ENCODE measurements at regions of chr1 and their contacts with region 1.

Region 1: GRCh38 chr1:42681741-42682483 is at the start of gene YBX1:
- DNase-seq: peak; percentile 99
- H3K4me3 Mint-ChIP-seq: peak within 1 kb of the TSS; percentile 89
- H3K27ac Mint-ChIP-seq: peak within 1 kb of the TSS; percentile 98
- H3K4me1 Mint-ChIP-seq: peaks cover 36% of the 10 kb centered on the region
- H3K27me3 Mint-ChIP-seq: no peaks in the 10 kb centered on the region
- CTCF ChIP-seq: no peak
- total RNA-seq, gene YBX1: 1,134 and 1,200 TPM in 2 replicates

Region 2: GRCh38 chr1:41496080-41497055 is 1185.5 kb before region 1 on chr1:
- CTCF ChIA-PET with region 1: no interaction called
- POLR2A ChIA-PET with region 1: no interaction called
- intact Hi-C with region 1: loop called (anchors 10 kb)
- DNase-seq: peak; percentile 88
- H3K4me3 Mint-ChIP-seq: peak overlapping the region; percentile 36
- H3K27ac Mint-ChIP-seq: peak overlapping the region; percentile 91
- H3K4me1 Mint-ChIP-seq: peaks cover 58% of the 10 kb centered on the region
- H3K27me3 Mint-ChIP-seq: no peaks in the 10 kb centered on the region
- CTCF ChIP-seq: no peak

Region 3: DNA sequence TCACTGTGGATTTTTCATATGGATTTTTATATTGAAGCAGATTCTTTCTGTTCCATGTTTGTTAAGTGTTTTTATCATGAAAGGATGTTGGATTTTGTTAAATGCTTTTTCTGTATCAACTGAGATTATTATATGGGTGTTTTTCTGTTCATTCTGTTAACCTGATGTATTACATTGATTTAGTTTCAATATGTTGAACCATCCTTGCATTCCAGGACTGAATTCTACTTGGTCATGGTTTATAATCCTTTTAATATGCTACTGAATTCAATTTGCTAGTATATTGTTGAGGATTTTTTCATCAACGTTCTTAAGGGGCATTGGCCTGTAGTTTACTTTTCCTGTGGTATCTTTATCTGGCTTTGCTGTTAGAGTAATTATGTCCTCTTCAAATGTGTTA is 163.0 kb before region 1 on chr1:
- CTCF ChIA-PET with region 1: no interaction called
- POLR2A ChIA-PET with region 1: no interaction called
- intact Hi-C with region 1: no loop called
- DNase-seq: no peak
- H3K4me3 Mint-ChIP-seq: no peak overlapping the region
- H3K27ac Mint-ChIP-seq: no peak overlapping the region
- H3K4me1 Mint-ChIP-seq: no peaks in the 10 kb centered on the region
- H3K27me3 Mint-ChIP-seq: no peaks in the 10 kb centered on the region
- CTCF ChIP-seq: no peak

Region 4: GRCh38 chr1:42657971-42658879 is 23.7 kb before region 1 on chr1 and contains the start of gene PPIH:
- CTCF ChIA-PET with region 1: interaction called, 3 read pairs
- POLR2A ChIA-PET with region 1: interaction called, 104 read pairs
- intact Hi-C with region 1: loop called (anchors 2 kb)
- DNase-seq: peak; percentile 92
- H3K4me3 Mint-ChIP-seq: peak within 1 kb of the TSS; percentile 97
- H3K27ac Mint-ChIP-seq: peak within 1 kb of the TSS; percentile 95
- H3K4me1 Mint-ChIP-seq: peaks cover 13% of the 10 kb centered on the region
- H3K27me3 Mint-ChIP-seq: peaks cover under 1% of the 10 kb centered on the region
- CTCF ChIP-seq: no peak
- total RNA-seq, gene PPIH: 52.4 and 55.9 TPM in 2 replicates

Region 5: GRCh38 chr1:42747125-42747524 is 65.2 kb after region 1 on chr1:
- CTCF ChIA-PET with region 1: no interaction called
- POLR2A ChIA-PET with region 1: interaction called, 14 read pairs
- intact Hi-C with region 1: no loop called
- DNase-seq: peak; percentile 35
- H3K4me3 Mint-ChIP-seq: no peak overlapping the region
- H3K27ac Mint-ChIP-seq: no peak overlapping the region
- H3K4me1 Mint-ChIP-seq: peaks cover 18% of the 10 kb centered on the region
- H3K27me3 Mint-ChIP-seq: no peaks in the 10 kb centered on the region
- CTCF ChIP-seq: peak; percentile 58

Region 6: DNA sequence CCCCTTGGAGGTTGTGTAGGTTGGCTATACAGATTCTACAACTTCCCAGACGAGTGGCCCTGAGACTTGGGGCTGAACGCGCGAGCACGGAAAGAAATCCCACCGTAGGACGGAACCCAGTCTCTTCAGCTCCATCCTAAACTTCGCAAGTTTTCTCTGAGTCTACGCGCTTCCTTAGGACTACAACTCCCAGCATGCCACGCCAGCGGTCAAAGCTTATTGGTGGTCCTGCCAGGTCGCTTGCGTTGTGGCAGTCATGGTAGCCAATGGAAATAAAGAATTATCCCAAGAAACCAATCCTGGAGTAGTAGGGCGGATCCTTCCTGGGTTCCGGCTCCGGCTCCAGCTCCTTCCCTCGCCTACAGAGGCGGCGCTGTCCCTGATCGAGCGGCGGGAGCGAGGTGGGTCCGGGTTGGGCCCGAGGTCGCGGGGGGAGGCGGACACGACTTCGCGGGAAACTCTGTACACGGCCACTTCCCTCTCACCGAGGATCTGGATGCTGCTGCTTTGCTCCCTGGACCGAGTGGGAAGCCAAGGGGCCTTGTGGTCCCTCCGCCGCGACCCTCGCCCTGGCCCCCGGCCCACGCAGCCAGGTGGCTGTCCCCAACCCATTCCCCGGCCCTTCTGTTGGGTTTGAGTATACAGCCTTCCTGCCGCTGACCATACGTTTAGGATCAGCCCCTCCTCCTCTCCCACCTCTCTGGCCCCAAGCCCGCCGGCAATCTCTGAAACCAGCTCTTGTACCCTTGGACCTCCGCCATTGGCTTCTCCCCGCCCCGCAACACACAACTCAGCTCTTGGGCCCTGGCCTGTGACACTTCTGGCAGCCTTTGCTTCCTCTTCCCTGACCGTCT is 164.6 kb after region 1 on chr1 and contains the start of gene ZNF691:
- CTCF ChIA-PET with region 1: no interaction called
- POLR2A ChIA-PET with region 1: interaction called, 12 read pairs
- intact Hi-C with region 1: no loop called
- DNase-seq: peak; percentile 97
- H3K4me3 Mint-ChIP-seq: peak within 1 kb of the TSS; percentile 98
- H3K27ac Mint-ChIP-seq: peak within 1 kb of the TSS; percentile 98
- H3K4me1 Mint-ChIP-seq: peaks cover 28% of the 10 kb centered on the region
- H3K27me3 Mint-ChIP-seq: no peaks in the 10 kb centered on the region
- CTCF ChIP-seq: peak; percentile 27
- total RNA-seq, gene ZNF691: 8.4 and 9.5 TPM in 2 replicates